A549 (cell line): ENCODE measurements at regions of chr15 and their contacts with region 1.

Region 1: DNA sequence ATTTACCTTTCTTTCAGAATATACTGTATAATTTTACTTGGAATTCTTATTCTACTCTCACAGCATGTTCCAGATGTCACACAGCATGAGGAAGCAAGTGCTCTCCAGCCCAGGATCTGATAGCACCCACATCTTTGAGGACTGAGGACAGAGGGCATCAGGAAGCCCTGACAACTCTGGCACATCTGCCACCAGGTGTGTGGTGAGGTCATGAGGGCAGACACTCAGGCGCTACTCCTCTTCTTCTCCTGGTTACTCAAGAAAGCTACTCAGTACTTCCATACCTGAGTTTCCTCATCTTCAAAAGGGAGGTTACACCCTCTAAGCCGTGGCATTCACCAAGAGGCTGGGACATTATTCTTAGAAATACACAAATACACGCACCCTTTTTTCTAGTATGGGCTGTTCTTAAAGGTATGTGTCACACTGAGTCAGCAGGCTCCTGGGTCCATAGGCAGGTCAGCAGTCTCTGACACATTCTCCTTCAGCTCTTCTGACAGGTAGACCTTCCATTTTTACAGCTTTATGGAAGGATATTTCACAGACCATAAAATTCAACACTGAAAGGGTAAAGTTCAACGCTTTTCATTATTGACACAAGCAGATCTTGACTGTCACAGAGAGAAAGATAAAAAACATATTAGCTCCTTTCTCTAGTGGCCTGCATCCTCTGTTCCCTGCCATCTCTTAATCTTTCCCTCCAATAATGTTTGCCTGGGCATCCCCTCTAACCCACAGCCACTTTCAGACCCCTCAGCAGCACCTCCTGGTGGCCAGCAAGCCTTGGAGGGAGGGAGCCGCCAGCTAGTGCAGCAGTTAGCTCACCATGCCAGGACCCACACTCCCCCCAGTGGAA is 103.2 kb upstream of the TJP1 start:
- DNase-seq: peak; percentile 84 to 92
- ATAC-seq: peak; percentile 81 to 88
- H3K4me3 ChIP-seq: no peak overlapping the region
- H3K27ac ChIP-seq: peak overlapping the region; percentile 70 to 86
- H3K4me1 ChIP-seq: peaks cover 60% of the 10 kb centered on the region
- CTCF ChIP-seq: peak; percentile 97
- EP300 ChIP-seq: peak in 1 of 2 experiments; percentile 32; a peak in 1 of 5 replicates
- POLR2A ChIP-seq: no peak
- RAD21 ChIP-seq: peak; percentile 94 to 99

Region 2: DNA sequence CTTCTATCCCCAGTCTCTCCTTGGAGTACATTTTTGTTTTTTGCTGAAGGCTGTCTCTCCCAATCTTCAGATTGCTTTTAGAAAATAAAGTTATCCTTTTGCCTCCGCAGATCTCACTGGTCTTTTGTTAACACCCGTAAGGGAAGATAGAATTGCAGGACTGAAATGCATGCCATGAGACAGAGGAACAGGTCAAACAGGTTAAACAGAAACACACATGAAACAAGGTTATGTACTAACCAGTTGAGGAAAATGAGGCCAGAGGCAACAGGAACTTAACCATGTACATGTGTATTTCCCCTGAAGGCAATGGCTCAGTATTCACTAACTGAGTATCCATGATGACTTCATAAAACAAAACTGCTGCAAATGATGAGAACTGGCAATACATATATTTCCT is 486.8 kb before region 1 on chr15:
- CTCF ChIA-PET with region 1: no interaction called
- POLR2A ChIA-PET with region 1: no interaction called
- DNase-seq: no peak
- ATAC-seq: no peak
- H3K4me3 ChIP-seq: no peak overlapping the region
- H3K27ac ChIP-seq: no peak overlapping the region
- H3K4me1 ChIP-seq: no peaks in the 10 kb centered on the region; the same call in 2 of the 3 replicates
- CTCF ChIP-seq: no peak
- EP300 ChIP-seq: no peak
- POLR2A ChIP-seq: no peak
- RAD21 ChIP-seq: no peak

Region 3: DNA sequence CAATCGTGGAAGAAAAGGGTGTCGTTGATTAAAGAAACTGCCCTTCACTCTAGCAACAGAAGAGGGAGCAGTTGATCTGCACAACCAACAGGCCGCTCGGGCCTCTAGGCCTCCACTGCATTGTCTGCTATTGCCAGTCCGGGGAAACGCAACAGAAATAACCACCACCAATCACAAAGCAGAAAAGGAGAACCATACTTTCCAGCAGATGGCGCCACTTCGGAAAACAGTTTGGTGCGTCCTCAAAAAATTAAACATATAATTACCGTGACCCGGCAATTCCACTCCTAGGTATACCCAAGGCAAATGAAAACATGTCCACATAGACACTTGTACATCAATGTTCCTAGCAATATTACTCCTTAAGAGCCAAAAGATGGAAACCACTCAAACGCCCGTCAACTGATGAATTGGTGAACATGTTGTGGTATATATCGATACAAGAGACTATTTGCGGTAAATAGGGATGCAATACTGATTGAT is 257.3 kb before region 1 on chr15:
- CTCF ChIA-PET with region 1: interaction called, 49 read pairs
- POLR2A ChIA-PET with region 1: no interaction called
- DNase-seq: peak; percentile 86 to 97
- ATAC-seq: peak; percentile 61 to 74
- H3K4me3 ChIP-seq: no peak overlapping the region
- H3K27ac ChIP-seq: peak overlapping the region; percentile 91 to 93
- H3K4me1 ChIP-seq: peaks cover 38% of the 10 kb centered on the region
- CTCF ChIP-seq: peak; percentile 100
- EP300 ChIP-seq: no peak
- POLR2A ChIP-seq: no peak
- RAD21 ChIP-seq: peak; percentile 99

Region 4: DNA sequence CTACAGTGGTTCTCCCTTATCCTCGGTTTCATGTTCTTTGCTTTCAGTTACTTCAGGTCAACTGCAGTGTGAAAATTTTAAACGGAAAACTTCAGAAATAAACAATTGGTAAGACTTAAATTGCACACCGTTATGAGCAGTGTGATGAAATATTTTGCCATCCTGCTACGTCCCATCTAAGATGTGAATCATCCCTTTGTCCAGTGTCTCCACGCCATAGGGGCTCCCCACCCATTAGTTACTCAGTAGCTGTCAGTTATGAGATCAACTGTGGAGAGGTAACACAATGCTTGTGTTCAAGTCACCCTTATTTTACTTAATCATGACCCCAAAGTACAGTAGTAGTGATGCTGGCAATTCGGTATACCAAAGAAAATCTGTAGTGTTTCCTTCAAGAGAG is 150.6 kb before region 1 on chr15:
- CTCF ChIA-PET with region 1: interaction called, 13 read pairs
- POLR2A ChIA-PET with region 1: no interaction called
- DNase-seq: peak; percentile 48 to 87
- ATAC-seq: peak; percentile 92 to 96
- H3K4me3 ChIP-seq: peak overlapping the region; percentile 17
- H3K27ac ChIP-seq: peak overlapping the region; percentile 71 to 82
- H3K4me1 ChIP-seq: peaks cover 67% of the 10 kb centered on the region
- CTCF ChIP-seq: no peak
- EP300 ChIP-seq: peak in 1 of 2 experiments; percentile 64; a peak in 1 of 5 replicates
- POLR2A ChIP-seq: no peak
- RAD21 ChIP-seq: no peak

Region 5: DNA sequence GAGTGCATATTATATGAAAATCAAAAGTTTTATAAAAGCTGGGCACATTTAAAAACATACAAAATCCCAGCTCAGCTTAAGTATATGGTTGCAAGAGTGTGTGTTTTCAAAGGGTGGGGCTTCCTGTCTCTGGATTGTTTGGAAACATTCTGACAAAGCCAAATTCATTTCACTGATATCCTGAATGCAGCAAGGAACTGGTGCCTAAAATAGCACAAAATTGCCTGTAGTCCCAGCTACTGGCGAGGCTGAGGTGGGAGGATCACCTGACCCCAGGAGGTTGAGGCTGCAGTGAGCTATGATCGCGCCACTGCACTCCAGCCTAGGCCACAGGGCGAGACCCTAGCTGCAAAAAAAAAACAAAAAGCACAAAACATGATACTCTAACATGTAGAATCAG is 90.2 kb before region 1 on chr15:
- CTCF ChIA-PET with region 1: interaction called, 16 read pairs
- POLR2A ChIA-PET with region 1: no interaction called
- DNase-seq: no peak
- ATAC-seq: no peak; a peak in 1 of 6 replicates
- H3K4me3 ChIP-seq: no peak overlapping the region
- H3K27ac ChIP-seq: no peak overlapping the region
- H3K4me1 ChIP-seq: peaks cover 11% of the 10 kb centered on the region
- CTCF ChIP-seq: no peak
- EP300 ChIP-seq: no peak
- POLR2A ChIP-seq: no peak
- RAD21 ChIP-seq: no peak

Region 6: GRCh38 chr15:29863438-29863837 is 62.0 kb before region 1 on chr15:
- CTCF ChIA-PET with region 1: interaction called, 11 read pairs
- POLR2A ChIA-PET with region 1: no interaction called
- DNase-seq: no peak
- ATAC-seq: no peak
- H3K4me3 ChIP-seq: no peak overlapping the region
- H3K27ac ChIP-seq: no peak overlapping the region
- H3K4me1 ChIP-seq: peaks cover 13% of the 10 kb centered on the region; the same call in 2 of the 3 replicates
- CTCF ChIP-seq: no peak
- EP300 ChIP-seq: no peak
- POLR2A ChIP-seq: no peak
- RAD21 ChIP-seq: no peak

Region 7: GRCh38 chr15:29900237-29901189 is 24.9 kb before region 1 on chr15:
- CTCF ChIA-PET with region 1: interaction called, 10 read pairs
- POLR2A ChIA-PET with region 1: interaction called, 3 read pairs
- DNase-seq: no peak
- ATAC-seq: peak; percentile 36 to 43; a peak in 2 of 6 replicates
- H3K4me3 ChIP-seq: no peak overlapping the region
- H3K27ac ChIP-seq: no peak overlapping the region
- H3K4me1 ChIP-seq: no peaks in the 10 kb centered on the region
- CTCF ChIP-seq: no peak
- EP300 ChIP-seq: no peak
- POLR2A ChIP-seq: no peak
- RAD21 ChIP-seq: no peak

Region 8: DNA sequence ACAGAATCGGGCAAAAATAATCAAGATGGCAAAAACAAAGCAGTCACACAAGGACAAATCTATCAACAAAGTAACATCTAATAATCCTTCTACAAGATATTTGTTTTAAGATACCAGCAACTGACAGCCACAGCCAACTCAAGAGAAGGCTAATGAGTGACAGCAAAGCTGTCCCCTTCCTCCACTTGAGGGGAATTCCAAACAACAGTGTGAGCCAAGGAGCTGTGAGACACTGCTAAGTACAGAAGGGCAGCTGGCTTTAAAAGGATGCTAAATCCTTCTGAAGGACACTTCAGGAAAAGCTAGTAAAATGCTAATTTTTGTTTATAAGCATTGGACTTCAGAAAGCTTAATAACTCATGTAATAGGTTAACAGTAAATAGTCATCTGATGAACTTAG is 37.0 kb after region 1 on chr15:
- CTCF ChIA-PET with region 1: interaction called, 11 read pairs
- POLR2A ChIA-PET with region 1: no interaction called
- DNase-seq: no peak
- ATAC-seq: no peak
- H3K4me3 ChIP-seq: no peak overlapping the region
- H3K27ac ChIP-seq: no peak overlapping the region
- H3K4me1 ChIP-seq: no peaks in the 10 kb centered on the region
- CTCF ChIP-seq: no peak
- EP300 ChIP-seq: no peak
- POLR2A ChIP-seq: no peak
- RAD21 ChIP-seq: no peak

Region 9: GRCh38 chr15:30001602-30002001 is 76.1 kb after region 1 on chr15:
- CTCF ChIA-PET with region 1: no interaction called
- POLR2A ChIA-PET with region 1: no interaction called
- DNase-seq: no peak
- ATAC-seq: no peak
- H3K4me3 ChIP-seq: no peak overlapping the region
- H3K27ac ChIP-seq: no peak overlapping the region
- H3K4me1 ChIP-seq: no peaks in the 10 kb centered on the region
- CTCF ChIP-seq: no peak
- EP300 ChIP-seq: no peak
- POLR2A ChIP-seq: no peak
- RAD21 ChIP-seq: no peak